Common myeloid progenitor, CD34-positive (primary cell): ENCODE measurements at regions of chr20 and their contacts with region 1.

Region 1: DNA sequence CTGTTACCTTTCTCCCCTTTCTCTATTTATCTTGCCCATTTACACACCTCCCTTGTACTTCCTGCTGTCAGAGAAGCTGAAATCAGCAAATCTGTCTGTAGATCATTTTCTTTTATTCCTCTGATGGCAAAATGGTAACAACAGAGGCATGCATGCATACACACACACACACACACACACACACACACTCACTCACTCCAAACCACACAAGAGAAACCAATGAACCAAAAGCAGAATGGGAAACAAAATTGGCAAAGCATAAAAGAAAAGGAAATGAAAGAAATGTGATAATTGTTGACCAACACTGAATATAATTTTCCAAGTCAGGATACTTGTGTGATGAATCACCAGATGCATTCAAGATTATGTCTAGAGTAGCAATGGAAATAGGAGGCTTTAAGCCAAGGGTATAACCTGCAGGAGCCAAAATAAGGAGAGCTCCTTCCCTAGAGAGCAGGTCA is 172.4 kb downstream of the PLCB4 start:
- DNase-seq: peak in 2 of 3 donors; percentile 30 to 32
- H3K4me3 ChIP-seq: no peak overlapping the region
- H3K27ac ChIP-seq: no peak overlapping the region
- H3K4me1 ChIP-seq: peaks cover 0 to 14% (median 2%) of the 10 kb centered on the region in 4 experiments
- H3K27me3 ChIP-seq: no peaks in the 10 kb centered on the region

Region 2: DNA sequence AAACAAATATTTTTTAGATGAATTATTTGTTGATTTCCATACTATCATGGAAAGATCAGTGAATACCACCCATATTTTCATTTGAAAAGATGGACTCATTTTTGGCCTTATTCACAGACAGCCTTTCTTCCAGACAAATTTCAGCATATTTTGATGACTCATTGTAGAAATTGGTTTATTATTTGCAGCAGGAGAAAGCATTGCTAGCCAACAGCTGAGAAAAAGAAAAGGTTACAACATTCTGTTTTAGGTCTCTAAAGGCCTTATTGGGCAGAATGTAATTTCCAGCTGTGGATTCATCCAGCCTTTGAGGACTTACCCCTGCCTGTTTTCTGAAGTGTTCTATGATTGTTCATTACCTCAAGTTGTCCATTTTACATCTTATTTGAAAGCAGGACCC is 29.6 kb after region 1 on chr20:
- CTCF ChIA-PET with region 1: no interaction called
- POLR2A ChIA-PET with region 1: interaction called, 10 read pairs
- DNase-seq: peak in 2 of 3 donors; percentile 17 to 23
- H3K4me3 ChIP-seq: no peak overlapping the region
- H3K27ac ChIP-seq: no peak overlapping the region
- H3K4me1 ChIP-seq: no peaks in the 10 kb centered on the region
- H3K27me3 ChIP-seq: no peaks in the 10 kb centered on the region